ENCODE measurements at regions of chr1 and their contacts with region 1.

Region 1: DNA sequence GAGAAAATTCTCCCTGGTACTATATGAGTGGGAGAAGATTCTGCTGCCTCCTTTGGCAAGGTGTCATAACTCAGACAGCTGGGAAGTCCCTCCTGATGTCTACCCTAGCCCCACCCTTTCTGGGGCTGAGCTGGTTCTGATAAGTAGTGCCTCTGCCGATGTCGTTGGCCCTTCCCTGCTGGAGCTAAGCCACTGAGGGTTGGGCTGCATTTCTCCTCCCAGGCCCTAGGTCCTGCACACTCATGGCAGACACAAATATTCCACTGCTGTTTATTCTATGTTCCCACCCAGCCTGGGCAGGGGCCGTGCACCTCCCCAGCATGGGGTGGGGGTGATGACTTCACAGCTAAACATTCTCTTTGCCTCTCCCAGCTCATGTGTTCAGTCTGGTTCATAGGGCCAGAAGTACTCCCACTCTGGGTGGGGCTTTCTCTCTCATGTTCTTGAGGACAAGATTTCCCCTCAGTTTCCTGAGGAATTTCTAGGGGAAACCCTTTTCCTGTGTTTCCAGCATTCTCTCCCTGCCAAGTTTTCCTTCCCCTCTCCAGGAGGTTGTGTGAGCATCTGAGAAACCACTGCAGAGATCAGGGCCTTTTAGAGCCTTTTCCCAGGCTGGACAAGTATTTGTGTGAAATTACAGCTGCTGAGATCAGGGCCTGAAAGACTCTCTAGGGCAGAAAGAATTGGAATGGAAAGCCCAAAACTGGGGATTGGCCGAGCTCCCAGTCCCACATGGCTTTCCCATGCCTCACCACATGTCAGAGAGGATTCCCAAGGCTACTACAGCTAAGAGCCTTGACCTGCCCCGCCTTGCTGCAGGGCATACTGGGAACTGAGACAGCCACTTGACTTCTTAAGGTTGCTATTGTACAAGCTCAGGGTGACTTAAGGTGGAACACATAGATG is 66.2 kb downstream of the ATP2B4 start:
- DNase-seq: peak; percentile 99
- H3K4me3 Mint-ChIP-seq: peak overlapping the region; percentile 61
- H3K27ac Mint-ChIP-seq: peak overlapping the region; percentile 96
- H3K4me1 Mint-ChIP-seq: peaks cover 37% of the 10 kb centered on the region
- H3K27me3 Mint-ChIP-seq: no peaks in the 10 kb centered on the region
- CTCF ChIP-seq: no peak

Region 2: GRCh38 chr1:203534527-203535230 is 158.1 kb before region 1 on chr1:
- CTCF ChIA-PET with region 1: no interaction called
- POLR2A ChIA-PET with region 1: interaction called, 13 read pairs
- intact Hi-C with region 1: no loop called
- DNase-seq: peak; percentile 95
- H3K4me3 Mint-ChIP-seq: peak overlapping the region; percentile 35
- H3K27ac Mint-ChIP-seq: peak overlapping the region; percentile 58
- H3K4me1 Mint-ChIP-seq: peaks cover 36% of the 10 kb centered on the region
- H3K27me3 Mint-ChIP-seq: no peaks in the 10 kb centered on the region
- CTCF ChIP-seq: no peak

Region 3: DNA sequence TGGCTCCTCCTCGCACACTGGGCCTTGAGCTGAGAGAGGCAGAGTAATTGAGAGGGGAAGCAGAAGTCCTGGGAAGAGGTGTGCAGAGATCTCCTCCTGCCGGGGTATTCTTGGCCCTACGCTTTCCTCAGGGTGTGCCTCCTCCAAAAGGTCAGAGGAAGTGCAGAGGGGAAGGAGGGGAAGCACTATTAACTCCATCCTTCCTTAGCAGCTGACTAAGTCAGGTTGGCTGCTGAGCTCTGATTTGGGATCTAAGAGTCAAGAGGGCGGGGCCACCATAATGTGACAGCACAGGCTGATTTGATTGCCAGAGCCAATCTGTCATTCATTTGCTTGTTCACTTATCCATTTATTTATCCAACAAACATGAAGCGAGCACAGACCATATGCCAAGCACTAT is 53.9 kb before region 1 on chr1:
- CTCF ChIA-PET with region 1: interaction called, 8 read pairs
- POLR2A ChIA-PET with region 1: interaction called, 19 read pairs
- intact Hi-C with region 1: no loop called
- DNase-seq: no peak
- H3K4me3 Mint-ChIP-seq: no peak overlapping the region
- H3K27ac Mint-ChIP-seq: no peak overlapping the region
- H3K4me1 Mint-ChIP-seq: peaks cover 38% of the 10 kb centered on the region
- H3K27me3 Mint-ChIP-seq: no peaks in the 10 kb centered on the region
- CTCF ChIP-seq: no peak

Region 4: DNA sequence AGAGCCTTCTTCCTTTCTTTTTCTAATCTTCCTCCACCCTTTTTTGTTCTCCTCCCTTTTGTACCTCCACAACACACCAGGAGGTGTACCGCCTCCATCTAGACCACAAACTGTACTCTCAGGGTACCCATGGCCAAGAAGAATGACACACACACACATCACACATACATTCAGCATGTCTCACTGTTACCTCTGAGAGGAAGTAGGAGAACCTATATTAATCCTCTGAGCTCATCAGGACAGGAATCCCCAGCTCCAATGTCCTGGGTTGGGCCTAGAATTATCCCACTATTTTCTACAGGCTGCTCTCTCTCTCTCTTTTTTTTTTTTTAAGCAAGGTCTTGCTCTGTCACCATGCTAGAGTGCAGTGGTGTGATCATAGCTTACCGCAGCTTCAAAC is 29.5 kb before region 1 on chr1:
- CTCF ChIA-PET with region 1: interaction called, 12 read pairs
- POLR2A ChIA-PET with region 1: interaction called, 27 read pairs
- intact Hi-C with region 1: loop called (anchors 1 kb)
- DNase-seq: peak; percentile 98
- H3K4me3 Mint-ChIP-seq: peak overlapping the region; percentile 3
- H3K27ac Mint-ChIP-seq: peak overlapping the region; percentile 58
- H3K4me1 Mint-ChIP-seq: peaks cover 34% of the 10 kb centered on the region
- H3K27me3 Mint-ChIP-seq: no peaks in the 10 kb centered on the region
- CTCF ChIP-seq: no peak

Region 5: DNA sequence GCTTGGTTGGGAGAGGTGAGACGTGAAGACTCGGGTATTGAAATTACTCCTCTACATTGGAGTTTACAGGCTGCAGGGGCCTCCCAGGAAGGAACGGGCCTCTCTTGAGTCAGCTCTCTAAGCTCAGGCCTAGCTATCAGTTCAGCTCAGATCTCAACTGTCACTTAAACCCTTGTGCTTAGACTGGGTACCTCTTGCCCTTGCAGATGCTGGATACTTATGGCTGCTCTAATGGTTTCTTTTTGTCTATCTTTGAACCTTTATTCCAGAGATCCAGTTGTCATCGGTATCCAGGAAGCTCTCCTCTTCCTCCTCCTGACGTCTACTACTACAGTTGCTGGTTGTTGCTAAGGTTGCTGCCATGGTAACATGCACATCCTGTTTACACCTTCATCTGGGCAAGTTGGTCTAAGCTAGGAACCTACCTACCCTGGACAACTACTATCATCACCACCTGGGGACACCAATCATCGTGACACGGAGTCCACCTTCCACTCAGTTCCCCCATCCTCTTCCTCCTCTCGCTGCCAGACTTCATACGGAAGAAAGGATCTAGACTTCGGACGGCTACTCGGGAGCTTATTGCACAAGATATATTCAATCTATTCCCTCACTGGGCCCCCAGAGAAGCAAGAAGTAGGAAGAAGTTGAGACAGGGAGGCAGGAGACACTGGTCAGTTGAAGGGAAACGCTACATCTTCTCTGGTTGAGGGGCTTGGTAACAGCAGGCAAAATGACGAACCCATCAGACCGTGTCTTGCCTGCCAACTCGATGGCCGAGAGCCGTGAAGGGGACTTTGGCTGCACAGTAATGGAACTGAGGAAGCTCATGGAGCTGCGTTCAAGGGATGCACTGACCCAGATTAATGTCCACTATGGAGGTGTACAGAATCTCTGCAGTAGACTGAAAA is 10.1 kb before region 1 on chr1:
- CTCF ChIA-PET with region 1: interaction called, 5 read pairs
- POLR2A ChIA-PET with region 1: interaction called, 13 read pairs
- intact Hi-C with region 1: no loop called
- DNase-seq: no peak
- H3K4me3 Mint-ChIP-seq: no peak overlapping the region
- H3K27ac Mint-ChIP-seq: no peak overlapping the region
- H3K4me1 Mint-ChIP-seq: peaks cover 5% of the 10 kb centered on the region
- H3K27me3 Mint-ChIP-seq: no peaks in the 10 kb centered on the region
- CTCF ChIP-seq: no peak

Region 6: GRCh38 chr1:203795441-203796235 is 102.8 kb after region 1 on chr1 and contains the starts of genes ZBED6 and ZC3H11A:
- CTCF ChIA-PET with region 1: interaction called, 3 read pairs
- POLR2A ChIA-PET with region 1: interaction called, 6 read pairs
- intact Hi-C with region 1: loop called (anchors 5 kb)
- DNase-seq: peak; percentile 100
- H3K4me3 Mint-ChIP-seq: peak within 1 kb of the TSS; percentile 86
- H3K27ac Mint-ChIP-seq: peak within 1 kb of the TSS; percentile 98
- H3K4me1 Mint-ChIP-seq: peaks cover 44% of the 10 kb centered on the region
- H3K27me3 Mint-ChIP-seq: no peaks in the 10 kb centered on the region
- CTCF ChIP-seq: no peak
- total RNA-seq, gene ZBED6: 68.2 and 69.8 TPM in 2 replicates
- total RNA-seq, gene ZC3H11A: 148 and 156 TPM in 2 replicates

Measured in MCF 10A (cell line).